Mammary epithelial cell (primary cell): ENCODE measurements at regions of chr16 and their contacts with region 1.

Region 1: GRCh38 chr16:49788572-49788971 is 67.3 kb downstream of the ZNF423 start:
- DNase-seq: no peak
- H3K4me3 ChIP-seq: no peak overlapping the region
- H3K27ac ChIP-seq: no peak overlapping the region
- H3K4me1 ChIP-seq: no peaks in the 10 kb centered on the region
- H3K27me3 ChIP-seq: no peaks in the 10 kb centered on the region
- CTCF ChIP-seq: no peak

Region 2: DNA sequence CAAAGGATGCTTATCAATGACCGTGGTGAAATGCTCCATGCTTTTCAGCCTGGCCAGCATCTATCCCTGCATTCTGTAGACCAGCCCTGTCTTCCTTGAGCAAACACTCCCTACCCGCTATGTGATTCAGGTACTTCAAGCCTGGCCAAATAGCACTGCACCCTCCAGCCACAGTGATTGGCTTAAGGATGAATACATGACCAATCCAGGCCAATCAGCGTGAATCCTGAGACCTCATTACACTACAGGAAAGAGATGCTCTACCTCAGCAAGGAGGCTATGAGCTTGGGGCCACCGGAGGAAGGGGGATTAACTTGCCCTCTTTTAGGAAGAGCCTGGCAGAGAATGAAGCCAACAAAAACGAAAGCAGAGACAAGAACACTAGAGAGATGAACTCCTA is 95.1 kb before region 1 on chr16:
- CTCF ChIA-PET with region 1: no interaction called
- dilution Hi-C with region 1: loop called (anchors 5 kb)
- in situ Hi-C with region 1: no loop called
- intact Hi-C with region 1: no loop called
- DNase-seq: no peak
- H3K4me3 ChIP-seq: no peak overlapping the region
- H3K27ac ChIP-seq: no peak overlapping the region
- H3K4me1 ChIP-seq: no peaks in the 10 kb centered on the region
- H3K27me3 ChIP-seq: no peaks in the 10 kb centered on the region
- CTCF ChIP-seq: no peak

Region 3: GRCh38 chr16:49720225-49720624 is 68.3 kb before region 1 on chr16:
- CTCF ChIA-PET with region 1: no interaction called
- dilution Hi-C with region 1: loop called (anchors 5 kb)
- in situ Hi-C with region 1: no loop called
- intact Hi-C with region 1: no loop called
- DNase-seq: no peak
- H3K4me3 ChIP-seq: no peak overlapping the region
- H3K27ac ChIP-seq: no peak overlapping the region
- H3K4me1 ChIP-seq: no peaks in the 10 kb centered on the region
- H3K27me3 ChIP-seq: no peaks in the 10 kb centered on the region
- CTCF ChIP-seq: no peak

Region 4: DNA sequence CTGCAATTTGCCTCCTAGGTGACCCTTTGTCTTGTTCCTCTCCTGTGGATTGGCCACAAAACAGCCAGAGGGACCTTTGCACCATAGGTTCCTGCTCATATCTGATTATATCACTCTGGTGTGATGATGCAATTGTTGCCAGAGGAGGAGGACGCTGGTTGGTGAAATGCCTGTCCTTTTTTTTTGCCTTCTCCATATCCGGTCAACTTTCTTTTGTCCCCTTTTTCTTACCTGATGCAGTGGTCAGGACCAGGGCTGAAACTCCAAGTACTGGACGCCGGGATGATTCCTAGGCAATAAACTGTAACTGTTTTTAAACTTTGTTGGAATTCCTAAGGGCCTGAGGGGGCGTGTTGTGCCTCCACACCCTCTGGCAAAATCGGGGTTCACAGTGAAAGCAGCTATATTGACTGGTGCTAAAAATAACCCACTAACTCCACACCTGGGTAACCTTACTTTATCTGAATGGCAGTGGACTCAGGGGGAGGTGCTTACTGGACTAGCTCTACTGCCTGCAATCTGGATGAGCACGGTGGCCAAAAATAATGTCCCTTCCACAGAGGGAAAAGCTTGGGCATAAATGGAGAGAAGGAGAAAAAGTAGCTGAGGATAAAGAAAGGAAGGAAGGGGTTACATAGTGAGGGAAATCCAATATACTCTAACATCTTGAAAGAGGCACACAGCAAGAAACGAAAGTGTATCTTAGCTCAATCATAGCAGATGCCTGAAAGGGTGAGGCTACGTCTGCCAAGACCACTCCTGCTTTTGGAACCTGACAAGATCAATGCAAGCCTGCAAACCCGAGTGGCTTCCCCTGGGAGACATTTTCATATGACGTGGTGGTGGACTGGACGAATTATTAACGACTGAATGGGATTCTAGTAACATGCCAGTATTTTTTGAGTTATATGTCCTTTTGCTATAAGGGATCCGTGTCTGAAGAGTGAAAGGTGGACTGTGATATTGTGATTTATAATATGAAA is 95.8 kb after region 1 on chr16:
- CTCF ChIA-PET with region 1: no interaction called
- dilution Hi-C with region 1: loop called (anchors 5 kb)
- in situ Hi-C with region 1: no loop called
- intact Hi-C with region 1: no loop called
- DNase-seq: no peak
- H3K4me3 ChIP-seq: no peak overlapping the region
- H3K27ac ChIP-seq: no peak overlapping the region
- H3K4me1 ChIP-seq: no peaks in the 10 kb centered on the region
- H3K27me3 ChIP-seq: no peaks in the 10 kb centered on the region
- CTCF ChIP-seq: no peak